Cardiac septum (tissue), 1 donor: ENCODE measurements at regions of chr10 and their contacts with region 1.

Region 1: GRCh38 chr10:30783939-30784500 is 154.5 kb upstream of the LYZL2 start:
- DNase-seq: peak; percentile 95

Region 2: GRCh38 chr10:30671026-30671616 is 112.9 kb before region 1 on chr10:
- intact Hi-C with region 1: no loop called
- DNase-seq: no peak

Region 3: DNA sequence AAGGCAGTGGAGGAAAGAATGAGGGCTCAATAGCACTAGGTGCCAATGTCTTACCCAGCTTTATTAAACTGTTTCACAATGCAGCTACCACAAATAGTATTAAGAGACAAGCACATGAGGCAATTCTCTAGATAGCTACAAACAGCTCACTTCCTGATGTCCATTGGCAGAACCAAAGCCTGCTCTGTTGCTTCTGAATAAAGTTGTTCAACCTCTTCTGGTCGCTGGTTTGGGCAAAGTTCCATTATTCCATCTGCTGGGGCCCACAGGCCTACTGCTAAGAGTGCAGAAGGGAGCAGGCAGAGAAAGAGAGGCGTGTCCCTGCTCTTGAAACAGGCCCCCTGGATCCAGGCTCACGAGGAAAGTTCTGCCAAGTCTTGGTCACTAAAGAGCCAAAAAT is 73.8 kb after region 1 on chr10:
- intact Hi-C with region 1: loop called (anchors 5 kb)
- DNase-seq: peak; percentile 80

Region 4: GRCh38 chr10:30963992-30964930 is 180.2 kb after region 1 on chr10:
- intact Hi-C with region 1: no loop called
- DNase-seq: no peak

Region 5: GRCh38 chr10:31075434-31075833 is 291.4 kb after region 1 on chr10:
- intact Hi-C with region 1: loop called (anchors 5 kb)
- DNase-seq: no peak

Region 6: DNA sequence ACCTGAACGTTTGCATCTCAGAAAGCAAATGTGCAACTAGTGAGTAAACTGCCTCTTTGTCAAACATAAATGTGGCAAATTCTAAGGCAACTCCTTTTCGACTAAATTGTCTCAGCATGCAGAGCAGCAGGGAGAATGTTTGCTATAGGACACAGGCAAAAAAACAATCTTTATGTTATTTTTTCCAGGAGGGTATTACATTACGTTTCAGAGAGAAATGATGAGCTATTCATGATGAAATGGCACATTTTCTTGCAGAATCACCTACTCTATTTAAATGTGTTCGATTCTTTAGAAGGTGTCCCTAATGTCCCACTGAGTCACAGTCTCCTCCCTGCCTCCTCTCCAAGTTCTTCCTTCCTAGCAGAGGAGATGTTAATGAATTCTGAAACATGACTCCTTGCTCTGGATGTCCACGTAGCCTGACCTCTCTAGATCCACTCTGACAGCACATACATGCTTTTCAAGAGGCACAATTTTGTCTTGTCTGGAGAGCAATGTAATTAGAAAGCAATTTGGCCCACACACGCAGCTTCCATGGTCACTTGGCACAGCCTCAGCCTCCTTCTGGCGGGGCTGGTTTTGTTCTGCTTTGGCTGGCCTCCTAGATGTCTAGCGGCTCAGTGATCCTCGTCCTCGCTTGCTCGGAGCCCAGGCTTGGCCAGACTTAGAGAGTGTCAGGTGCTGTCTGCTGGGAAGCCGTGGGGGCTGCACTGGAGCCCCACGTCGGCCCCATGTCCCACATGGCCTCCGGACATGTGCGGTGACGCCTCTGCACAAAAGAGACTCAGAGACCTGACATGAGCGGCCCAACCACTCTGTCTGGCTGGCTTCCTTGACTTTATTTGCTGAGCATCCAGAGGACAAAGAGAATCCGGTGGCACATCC is 373.3 kb after region 1 on chr10:
- intact Hi-C with region 1: loop called (anchors 5 kb)
- DNase-seq: peak; percentile 89

Region 7: GRCh38 chr10:31490858-31491504 is 707.0 kb after region 1 on chr10:
- intact Hi-C with region 1: loop called (anchors 2 kb)
- DNase-seq: no peak

Region 8: GRCh38 chr10:31697271-31698180 is 913.5 kb after region 1 on chr10:
- intact Hi-C with region 1: loop called (anchors 5 kb)
- DNase-seq: peak; percentile 91

Region 9: GRCh38 chr10:31808258-31809218 is 1024.5 kb after region 1 on chr10:
- intact Hi-C with region 1: loop called (anchors 2 kb)
- DNase-seq: no peak